ENCODE measurements at regions of chrX and their contacts with region 1.

Region 1: DNA sequence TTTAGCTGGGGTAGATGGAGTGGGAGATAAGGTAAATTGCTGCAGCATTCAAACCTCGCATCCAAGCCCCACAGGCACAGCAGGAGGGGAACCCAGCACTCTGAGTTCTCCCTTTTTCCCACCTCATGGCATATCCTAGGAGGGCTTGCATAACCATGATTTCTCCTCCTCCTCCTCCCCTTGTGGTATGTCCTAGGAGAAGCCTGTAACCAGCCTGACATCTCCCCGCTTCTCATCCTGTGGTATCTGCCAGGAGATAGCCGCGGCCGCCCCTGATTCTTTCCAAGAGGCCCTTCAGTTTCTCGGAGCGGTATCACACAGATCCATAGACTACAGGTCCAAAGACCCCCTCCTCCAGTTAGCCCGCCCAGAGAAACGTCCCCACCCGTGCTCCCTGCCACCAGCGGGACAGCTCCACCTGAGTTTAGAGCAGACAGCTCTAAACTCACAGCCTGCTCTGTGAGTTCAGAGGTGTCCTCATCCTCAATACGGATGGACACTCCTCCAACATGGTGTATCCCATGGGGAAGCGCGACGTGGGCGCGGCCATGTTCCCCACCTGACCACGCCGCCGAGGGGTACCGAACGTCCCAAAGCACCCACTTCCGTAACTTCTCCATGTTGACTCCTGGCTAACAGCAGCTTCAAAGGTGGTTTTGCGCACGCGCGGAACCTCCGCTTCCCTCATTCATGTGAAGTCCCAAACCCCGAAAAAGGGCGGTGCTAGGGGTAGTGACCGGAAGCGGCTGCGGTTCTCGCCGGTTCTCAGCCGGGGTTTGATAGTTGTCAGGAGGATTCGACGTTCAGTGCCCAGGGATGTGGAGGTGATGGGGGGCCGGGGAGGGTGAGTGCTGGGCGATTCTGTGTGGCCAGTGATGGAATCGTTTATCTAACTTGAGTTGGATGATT is at the start of gene ZNF81:
- DNase-seq: peak; percentile 86
- H3K4me3 ChIP-seq: peak within 1 kb of the TSS; percentile 75 to 90
- H3K27ac ChIP-seq: peak within 1 kb of the TSS; percentile 60 to 85; a peak in 3 of 4 replicates
- H3K4me1 ChIP-seq: peaks cover 0 to 9% of the 10 kb centered on the region in 2 experiments; a peak in 3 of 4 replicates
- H3K27me3 ChIP-seq: no peaks in the 10 kb centered on the region
- CTCF ChIP-seq: 0 out of 2 replicates have a peak, but pooled peaks have one; percentile 7
- EP300 ChIP-seq: no peak
- RAD21 ChIP-seq: no peak
- polyA plus RNA-seq, gene ZNF81: 3.5 and 6.0 TPM in 2 replicates

Region 2: DNA sequence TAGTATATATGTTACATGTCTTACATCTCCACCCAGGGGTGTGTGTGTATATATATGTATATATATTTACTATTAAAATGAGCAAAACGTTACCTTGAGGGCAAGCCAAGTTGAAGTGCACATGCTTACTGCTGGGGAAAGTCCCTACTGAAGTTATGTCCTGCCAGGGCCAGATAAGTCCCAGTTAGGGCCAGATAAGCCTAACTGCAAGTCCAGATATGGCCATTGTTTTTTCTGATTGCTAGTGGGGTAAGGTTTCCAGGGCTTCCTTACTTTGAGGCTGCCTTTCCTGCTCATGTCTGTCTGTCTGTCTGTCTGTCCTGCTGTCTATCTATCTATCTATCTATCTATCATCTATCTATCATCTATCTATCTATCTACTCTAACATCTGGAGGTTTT is 19.0 kb before region 1 on chrX:
- CTCF ChIA-PET with region 1: interaction called, 10 read pairs
- POLR2A ChIA-PET with region 1: no interaction called
- DNase-seq: no peak
- H3K4me3 ChIP-seq: no peak overlapping the region
- H3K27ac ChIP-seq: no peak overlapping the region
- H3K4me1 ChIP-seq: no peaks in the 10 kb centered on the region; a peak in 1 of 4 replicates
- H3K27me3 ChIP-seq: no peaks in the 10 kb centered on the region; the same call in 1 of the 2 replicates
- CTCF ChIP-seq: no peak
- EP300 ChIP-seq: no peak
- RAD21 ChIP-seq: no peak